ENCODE measurements at regions of chr6 and their contacts with region 1.

Region 1: DNA sequence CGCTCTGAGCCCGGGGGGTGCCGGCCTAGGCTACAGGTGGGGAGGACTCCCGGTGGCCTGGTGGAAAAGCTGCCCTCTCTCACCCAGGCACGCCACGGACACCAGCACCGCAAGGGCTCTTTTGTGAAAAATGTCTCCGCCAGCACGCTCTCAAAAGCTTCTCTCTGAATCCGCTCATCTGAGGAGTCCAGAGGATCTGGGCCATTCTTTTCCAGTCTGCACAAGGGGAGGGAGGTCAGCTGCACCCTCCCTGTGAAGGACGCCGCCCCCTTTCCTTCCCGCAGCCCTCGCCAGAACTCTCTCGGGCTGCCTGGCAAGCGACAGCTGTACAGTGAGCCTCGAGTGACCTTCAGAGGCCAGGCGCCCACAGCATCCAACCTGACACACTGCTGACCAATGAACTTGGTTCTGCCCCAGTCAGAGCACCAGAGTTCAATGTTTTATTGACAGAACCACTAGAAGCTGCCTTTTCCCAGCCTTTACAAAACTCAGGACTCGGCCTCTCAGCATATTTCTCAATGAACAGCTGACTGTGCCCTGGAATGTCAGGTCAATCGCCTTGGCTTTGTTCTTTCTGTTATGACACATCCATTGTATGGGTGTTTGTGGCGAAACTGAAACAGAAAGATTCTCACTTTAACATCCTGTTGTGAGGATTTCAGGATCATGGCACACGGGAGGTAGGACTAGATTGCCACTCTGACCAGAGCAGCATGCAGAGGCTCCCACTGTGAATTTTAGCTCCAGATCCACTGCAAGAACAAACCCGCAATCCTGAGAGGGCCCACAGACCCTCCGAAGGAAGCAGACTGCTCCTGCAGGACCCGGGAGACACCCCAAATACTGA is 26.7 kb downstream of the SERPINB9 start:
- DNase-seq: peak; percentile 76 to 81
- H3K4me3 ChIP-seq: peak overlapping the region; percentile 63
- H3K4me3 Mint-ChIP-seq: peak overlapping the region; percentile 68
- H3K27ac Mint-ChIP-seq: peak overlapping the region; percentile 97
- H3K4me1 ChIP-seq: peaks cover 29% of the 10 kb centered on the region
- H3K4me1 Mint-ChIP-seq: peaks cover 25% of the 10 kb centered on the region
- H3K27me3 ChIP-seq: no peaks in the 10 kb centered on the region
- H3K27me3 Mint-ChIP-seq: no peaks in the 10 kb centered on the region
- CTCF ChIP-seq: no peak

Region 2: GRCh38 chr6:2831392-2831791 is 45.0 kb before region 1 on chr6:
- CTCF ChIA-PET with region 1: no interaction called
- POLR2A ChIA-PET with region 1: no interaction called
- intact Hi-C with region 1: no loop called
- DNase-seq: no peak
- H3K4me3 ChIP-seq: no peak overlapping the region
- H3K4me3 Mint-ChIP-seq: no peak overlapping the region
- H3K27ac Mint-ChIP-seq: no peak overlapping the region
- H3K4me1 ChIP-seq: 0 out of 2 replicates have a peak, but pooled peaks cover 5% of the 10 kb centered on the region
- H3K4me1 Mint-ChIP-seq: peaks cover 19% of the 10 kb centered on the region
- H3K27me3 ChIP-seq: no peaks in the 10 kb centered on the region
- H3K27me3 Mint-ChIP-seq: no peaks in the 10 kb centered on the region
- CTCF ChIP-seq: no peak

Region 3: GRCh38 chr6:2841264-2842138 is 34.9 kb before region 1 on chr6 and contains the start of gene SERPINB1:
- CTCF ChIA-PET with region 1: interaction called, 5 read pairs
- POLR2A ChIA-PET with region 1: interaction called, 11 read pairs
- intact Hi-C with region 1: loop called (anchors 1 kb)
- DNase-seq: peak; percentile 92 to 93
- H3K4me3 ChIP-seq: peak within 1 kb of the TSS; percentile 44
- H3K4me3 Mint-ChIP-seq: peak within 1 kb of the TSS; percentile 98
- H3K27ac Mint-ChIP-seq: peak within 1 kb of the TSS; percentile 97
- H3K4me1 ChIP-seq: peaks cover 42% of the 10 kb centered on the region
- H3K4me1 Mint-ChIP-seq: peaks cover 16% of the 10 kb centered on the region
- H3K27me3 ChIP-seq: no peaks in the 10 kb centered on the region
- H3K27me3 Mint-ChIP-seq: no peaks in the 10 kb centered on the region
- CTCF ChIP-seq: peak in 1 of 2 experiments; percentile 29
- total RNA-seq, gene SERPINB1: 75.6 and 81.9 TPM in 2 replicates

Region 4: GRCh38 chr6:2848851-2849250 is 27.6 kb before region 1 on chr6:
- CTCF ChIA-PET with region 1: interaction called, 3 read pairs
- POLR2A ChIA-PET with region 1: no interaction called
- intact Hi-C with region 1: loop called (anchors 1 kb)
- DNase-seq: no peak
- H3K4me3 ChIP-seq: no peak overlapping the region
- H3K4me3 Mint-ChIP-seq: no peak overlapping the region
- H3K27ac Mint-ChIP-seq: no peak overlapping the region
- H3K4me1 ChIP-seq: peaks cover 27% of the 10 kb centered on the region
- H3K4me1 Mint-ChIP-seq: peaks cover 16% of the 10 kb centered on the region
- H3K27me3 ChIP-seq: no peaks in the 10 kb centered on the region
- H3K27me3 Mint-ChIP-seq: no peaks in the 10 kb centered on the region
- CTCF ChIP-seq: no peak

Region 5: DNA sequence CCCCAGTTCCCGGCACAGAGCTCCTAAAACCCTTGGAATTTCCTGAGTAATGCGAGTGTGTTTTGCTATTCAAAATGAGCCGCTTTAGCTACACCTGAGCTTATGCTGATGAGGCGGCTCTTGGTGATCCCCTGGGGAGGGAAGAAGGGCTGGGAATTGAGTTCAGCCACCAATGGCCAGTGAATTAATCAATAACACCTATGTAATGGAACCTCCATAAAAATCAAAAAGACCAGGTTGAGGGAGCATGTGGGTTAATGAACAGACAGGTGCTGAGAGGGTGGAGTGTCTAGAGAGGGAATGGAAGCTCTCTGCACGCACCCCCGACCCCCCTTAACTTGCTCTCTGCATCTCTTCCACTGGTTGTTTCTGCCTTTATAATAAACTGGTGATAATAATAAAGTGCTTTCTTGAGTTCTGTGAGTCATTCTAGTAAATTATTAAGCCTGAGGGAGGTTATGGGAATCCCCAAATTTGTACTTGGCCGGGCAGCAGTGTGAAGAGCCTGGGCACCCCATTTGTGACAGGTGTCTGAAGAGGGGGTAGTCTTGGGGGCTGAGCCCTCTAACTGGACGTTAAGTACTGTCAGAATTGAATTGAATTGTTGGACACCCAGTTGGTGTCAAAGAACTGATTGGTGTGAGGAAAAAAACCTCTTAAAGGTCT is 10.1 kb before region 1 on chr6:
- CTCF ChIA-PET with region 1: interaction called, 9 read pairs
- POLR2A ChIA-PET with region 1: interaction called, 13 read pairs
- intact Hi-C with region 1: no loop called
- DNase-seq: no peak
- H3K4me3 ChIP-seq: no peak overlapping the region
- H3K4me3 Mint-ChIP-seq: peak overlapping the region; percentile 61
- H3K27ac Mint-ChIP-seq: peak overlapping the region; percentile 86
- H3K4me1 ChIP-seq: peaks cover 34% of the 10 kb centered on the region
- H3K4me1 Mint-ChIP-seq: peaks cover 31% of the 10 kb centered on the region
- H3K27me3 ChIP-seq: no peaks in the 10 kb centered on the region
- H3K27me3 Mint-ChIP-seq: no peaks in the 10 kb centered on the region
- CTCF ChIP-seq: no peak

Region 6: GRCh38 chr6:2891768-2892170 is 15.3 kb after region 1 on chr6:
- CTCF ChIA-PET with region 1: no interaction called
- POLR2A ChIA-PET with region 1: interaction called, 25 read pairs
- intact Hi-C with region 1: loop called (anchors 1 kb)
- DNase-seq: peak; percentile 92 to 93
- H3K4me3 ChIP-seq: peak overlapping the region; percentile 71
- H3K4me3 Mint-ChIP-seq: peak overlapping the region; percentile 92
- H3K27ac Mint-ChIP-seq: peak overlapping the region; percentile 80
- H3K4me1 ChIP-seq: peaks cover 8% of the 10 kb centered on the region; the same call in 1 of the 2 replicates
- H3K4me1 Mint-ChIP-seq: peaks cover 10% of the 10 kb centered on the region
- H3K27me3 ChIP-seq: no peaks in the 10 kb centered on the region
- H3K27me3 Mint-ChIP-seq: no peaks in the 10 kb centered on the region
- CTCF ChIP-seq: no peak

Region 7: GRCh38 chr6:2911171-2911570 is 34.7 kb after region 1 on chr6:
- CTCF ChIA-PET with region 1: interaction called, 4 read pairs
- POLR2A ChIA-PET with region 1: no interaction called
- intact Hi-C with region 1: loop called (anchors 1 kb)
- DNase-seq: no peak
- H3K4me3 ChIP-seq: no peak overlapping the region
- H3K4me3 Mint-ChIP-seq: no peak overlapping the region
- H3K27ac Mint-ChIP-seq: no peak overlapping the region
- H3K4me1 ChIP-seq: peaks cover 22% of the 10 kb centered on the region
- H3K4me1 Mint-ChIP-seq: peaks cover 46% of the 10 kb centered on the region
- H3K27me3 ChIP-seq: no peaks in the 10 kb centered on the region
- H3K27me3 Mint-ChIP-seq: no peaks in the 10 kb centered on the region
- CTCF ChIP-seq: no peak

Region 8: GRCh38 chr6:2931970-2932748 is 55.7 kb after region 1 on chr6:
- CTCF ChIA-PET with region 1: interaction called, 9 read pairs
- POLR2A ChIA-PET with region 1: no interaction called
- intact Hi-C with region 1: loop called (anchors 1 kb)
- DNase-seq: peak; percentile 85 to 90
- H3K4me3 ChIP-seq: no peak overlapping the region
- H3K4me3 Mint-ChIP-seq: no peak overlapping the region
- H3K27ac Mint-ChIP-seq: no peak overlapping the region
- H3K4me1 ChIP-seq: no peaks in the 10 kb centered on the region
- H3K4me1 Mint-ChIP-seq: peaks cover 11% of the 10 kb centered on the region
- H3K27me3 ChIP-seq: no peaks in the 10 kb centered on the region
- H3K27me3 Mint-ChIP-seq: no peaks in the 10 kb centered on the region
- CTCF ChIP-seq: peak; percentile 91 to 97